ENCODE measurements at regions of chr12 and their contacts with region 1.

Region 1: DNA sequence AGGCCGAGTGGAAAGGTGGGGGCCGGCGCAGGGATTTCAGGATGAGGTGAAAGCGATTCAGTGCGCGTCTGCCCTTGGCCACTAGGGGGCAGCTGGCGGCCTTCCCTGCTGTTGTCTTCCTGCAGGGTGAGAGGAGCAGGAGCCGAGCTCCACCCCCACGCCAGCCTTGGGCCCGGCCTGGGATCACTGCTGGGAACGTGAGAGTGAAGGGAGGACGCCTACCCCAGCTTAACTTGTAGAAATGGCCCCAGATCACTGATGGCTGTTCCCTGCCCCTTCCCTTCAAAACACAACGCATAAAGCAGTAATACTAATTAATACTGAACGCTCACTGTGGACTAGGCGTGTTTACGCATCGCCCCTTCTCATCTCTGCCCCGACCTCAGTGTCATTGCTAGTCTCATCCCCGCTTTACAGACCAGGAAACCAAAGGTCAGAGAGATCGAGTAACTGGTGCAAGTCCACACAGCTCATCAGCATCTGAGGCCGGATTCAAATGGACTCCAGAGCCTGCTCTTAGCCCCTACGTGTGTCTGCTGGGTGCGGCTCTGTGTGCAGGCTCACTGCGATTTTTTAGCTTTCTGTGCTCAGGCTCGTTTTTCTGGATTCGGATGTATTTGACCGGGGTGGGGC is 24.3 kb downstream of the MVK start:
- DNase-seq: peak; percentile 39
- ATAC-seq: peak; percentile 95
- H3K4me3 ChIP-seq: no peak overlapping the region
- H3K27ac ChIP-seq: no peak overlapping the region
- H3K4me1 ChIP-seq: peaks cover 8% of the 10 kb centered on the region; the same call in 1 of the 2 replicates
- H3K27me3 ChIP-seq: no peaks in the 10 kb centered on the region
- CTCF ChIP-seq: peak; percentile 98

Region 2: DNA sequence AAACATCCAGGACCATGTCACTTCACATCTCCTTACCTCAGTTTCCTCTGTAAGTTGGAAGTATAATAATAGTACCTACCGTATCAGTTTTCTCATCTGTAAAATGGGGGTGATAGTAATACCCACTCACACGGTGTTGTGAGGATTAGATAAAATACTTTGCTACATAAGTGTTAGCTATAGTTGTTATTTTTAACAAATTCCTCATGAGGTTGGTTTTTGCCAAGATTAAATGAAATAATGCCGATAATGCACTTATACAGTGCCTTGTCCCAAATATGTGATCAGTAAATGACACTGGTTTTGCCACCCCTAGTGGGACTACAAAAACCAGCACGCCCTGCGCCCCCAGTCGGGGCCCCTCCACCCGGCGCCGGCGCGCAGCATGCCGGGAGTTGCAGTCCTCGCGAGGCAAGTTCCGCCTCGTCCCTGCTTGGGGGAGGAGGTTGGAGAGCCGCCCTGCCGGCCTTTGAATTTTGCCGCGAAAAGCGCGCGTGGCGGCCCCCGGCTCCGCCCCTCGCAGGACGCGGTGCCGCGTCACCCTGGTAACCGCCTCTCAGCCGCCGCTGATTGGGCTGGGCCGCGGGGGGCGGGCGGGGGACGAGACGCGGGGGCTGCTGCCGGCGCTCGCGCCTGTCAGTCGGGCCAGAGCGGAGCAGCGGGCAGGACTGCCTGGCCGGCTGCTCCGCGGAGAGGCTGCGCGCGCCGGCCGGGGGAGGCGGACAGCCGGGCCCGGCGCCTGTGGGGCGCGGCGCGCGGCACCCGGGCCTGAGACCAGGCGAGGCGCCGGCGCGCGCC is 115.5 kb after region 1 on chr12 and contains the start of gene FAM222A:
- CTCF ChIA-PET with region 1: no interaction called
- POLR2A ChIA-PET with region 1: no interaction called
- in situ Hi-C with region 1: no loop called
- intact Hi-C with region 1: loop called (anchors 10 kb)
- DNase-seq: peak; percentile 58
- ATAC-seq: peak; percentile 89
- H3K4me3 ChIP-seq: peak within 1 kb of the TSS; percentile 52 to 56
- H3K27ac ChIP-seq: no peak within 1 kb of the TSS
- H3K4me1 ChIP-seq: peaks cover 36% of the 10 kb centered on the region
- H3K27me3 ChIP-seq: no peaks in the 10 kb centered on the region
- CTCF ChIP-seq: no peak
- total RNA-seq, gene FAM222A: 12.8 TPM

Region 3: GRCh38 chr12:109770104-109770860 is 172.4 kb after region 1 on chr12:
- CTCF ChIA-PET with region 1: interaction called, 7 read pairs
- POLR2A ChIA-PET with region 1: interaction called, 14 read pairs
- in situ Hi-C with region 1: no loop called
- intact Hi-C with region 1: loop called (anchors 1 kb)
- DNase-seq: no peak
- ATAC-seq: no peak
- H3K4me3 ChIP-seq: no peak overlapping the region
- H3K27ac ChIP-seq: no peak overlapping the region
- H3K4me1 ChIP-seq: peaks cover 8% of the 10 kb centered on the region
- H3K27me3 ChIP-seq: no peaks in the 10 kb centered on the region
- CTCF ChIP-seq: no peak

Region 4: GRCh38 chr12:109775172-109775881 is 177.4 kb after region 1 on chr12:
- CTCF ChIA-PET with region 1: interaction called, 7 read pairs
- POLR2A ChIA-PET with region 1: interaction called, 14 read pairs
- in situ Hi-C with region 1: no loop called
- intact Hi-C with region 1: loop called (anchors 1 kb)
- DNase-seq: peak; percentile 30
- ATAC-seq: peak; percentile 88
- H3K4me3 ChIP-seq: no peak overlapping the region
- H3K27ac ChIP-seq: no peak overlapping the region
- H3K4me1 ChIP-seq: peaks cover 8% of the 10 kb centered on the region
- H3K27me3 ChIP-seq: no peaks in the 10 kb centered on the region
- CTCF ChIP-seq: peak; percentile 97

Region 5: GRCh38 chr12:109782326-109782703 is 184.4 kb after region 1 on chr12:
- CTCF ChIA-PET with region 1: no interaction called
- POLR2A ChIA-PET with region 1: interaction called, 13 read pairs
- in situ Hi-C with region 1: no loop called
- intact Hi-C with region 1: no loop called
- DNase-seq: no peak
- ATAC-seq: no peak
- H3K4me3 ChIP-seq: no peak overlapping the region
- H3K27ac ChIP-seq: no peak overlapping the region
- H3K4me1 ChIP-seq: no peaks in the 10 kb centered on the region
- H3K27me3 ChIP-seq: no peaks in the 10 kb centered on the region
- CTCF ChIP-seq: no peak